ENCODE measurements at regions of chr3 and their contacts with region 1.

Region 1: GRCh38 chr3:41881233-41881821 is 80.6 kb downstream of the ULK4 start:
- DNase-seq: no peak
- H3K4me3 ChIP-seq: no peak overlapping the region
- H3K27ac ChIP-seq: no peak overlapping the region
- H3K27me3 ChIP-seq: no peaks in the 10 kb centered on the region
- CTCF ChIP-seq: peak; percentile 61 to 89 (median 76)

Region 2: GRCh38 chr3:40333416-40333815 is 1547.9 kb before region 1 on chr3:
- intact Hi-C with region 1: loop called (anchors 5 kb)
- DNase-seq: no peak
- H3K4me3 ChIP-seq: no peak overlapping the region
- H3K27ac ChIP-seq: no peak overlapping the region
- H3K27me3 ChIP-seq: no peaks in the 10 kb centered on the region
- CTCF ChIP-seq: no peak

Region 3: DNA sequence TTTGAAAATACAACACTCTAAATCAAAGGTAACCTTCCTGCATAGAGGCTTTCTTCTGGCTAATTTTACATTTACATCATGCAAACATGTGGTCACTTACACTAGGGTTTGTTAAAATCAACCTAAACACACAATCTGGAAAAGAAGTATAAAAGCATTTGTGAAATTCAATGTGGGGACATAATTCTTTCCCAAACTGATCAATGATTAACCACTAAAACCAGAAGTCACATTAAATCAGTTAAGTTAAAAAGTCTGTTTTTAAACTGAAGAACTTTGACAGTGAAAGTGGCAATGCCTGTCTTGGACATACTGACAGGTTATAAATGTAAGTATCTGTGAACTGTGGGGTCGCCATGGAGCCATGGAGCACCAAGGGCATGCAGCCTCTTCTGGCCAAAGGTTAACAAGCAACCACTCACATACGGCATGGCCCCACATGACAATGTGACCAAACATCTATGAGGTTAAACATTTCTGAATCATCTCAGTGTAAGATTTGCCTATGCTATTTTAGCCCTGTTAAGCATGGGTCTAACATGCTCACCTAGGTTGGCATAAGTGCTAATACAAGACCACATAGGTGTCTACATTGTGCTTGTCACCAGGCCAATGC is 403.8 kb before region 1 on chr3:
- intact Hi-C with region 1: no loop called
- DNase-seq: no peak
- H3K4me3 ChIP-seq: no peak overlapping the region
- H3K27ac ChIP-seq: no peak overlapping the region
- H3K27me3 ChIP-seq: no peaks in the 10 kb centered on the region
- CTCF ChIP-seq: no peak